Right lobe of liver (tissue), 6 donors: ENCODE measurements at regions of chr1 and their contacts with region 1.

Region 1: DNA sequence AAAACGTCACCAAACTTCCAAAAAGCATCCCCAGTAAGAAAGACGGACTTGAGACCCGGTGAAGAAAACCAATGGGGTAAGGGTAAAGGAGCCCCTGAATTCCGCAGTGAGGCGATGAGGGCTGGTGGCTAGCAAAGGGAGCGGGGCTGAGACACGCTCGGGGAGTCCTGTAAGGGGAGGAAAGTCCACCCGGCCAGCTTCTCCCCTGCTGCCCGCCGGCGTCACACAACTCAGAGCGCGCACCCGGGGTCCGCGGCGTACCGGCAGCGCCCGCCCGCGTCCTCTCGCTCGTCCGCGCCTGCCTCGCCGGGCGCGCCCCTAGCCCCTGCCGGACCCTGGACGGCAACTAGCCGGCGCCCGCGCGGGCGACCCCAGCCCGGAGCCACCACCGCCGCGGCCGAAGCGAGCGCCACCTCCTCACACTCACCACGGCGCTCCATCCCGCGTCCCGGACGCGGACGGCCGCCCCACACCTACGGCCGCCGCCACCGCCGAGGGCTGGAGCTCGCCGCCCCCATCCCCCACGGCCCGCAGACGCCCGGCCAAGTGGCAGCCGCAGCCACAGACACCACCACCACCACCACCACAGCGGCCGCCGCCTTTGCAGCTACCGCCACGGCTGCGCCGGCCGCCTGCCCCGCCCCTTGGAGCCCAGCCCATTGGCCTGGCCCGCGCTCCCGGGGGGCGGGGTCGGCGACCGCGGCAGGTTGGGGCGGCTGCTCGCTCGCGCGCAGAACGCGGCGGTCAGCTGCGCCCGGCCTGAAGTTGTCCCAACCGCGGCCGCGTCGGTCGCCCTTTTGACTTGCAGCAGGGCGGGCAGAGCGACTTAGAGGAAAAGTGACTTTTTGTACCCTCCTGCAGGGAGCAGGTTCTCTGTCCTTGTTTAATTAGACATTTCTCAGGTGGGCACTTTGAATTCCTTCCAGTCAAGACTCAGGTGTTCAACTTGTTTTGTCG is 10.0 kb upstream of the ARHGAP29 start:
- DNase-seq: peak; percentile 90 to 91 (median 90)
- ATAC-seq: peak; percentile 93 to 96 (median 94)
- H3K4me3 ChIP-seq: peak overlapping the region; percentile 45 to 77 (median 60)
- H3K27ac ChIP-seq: peak overlapping the region; percentile 66 to 81 (median 80)
- H3K4me1 ChIP-seq: peaks cover 0 to 5% (median 0%) of the 10 kb centered on the region in 4 donors
- H3K27me3 ChIP-seq: no peaks in the 10 kb centered on the region
- CTCF ChIP-seq: no peak
- POLR2A ChIP-seq: peak; percentile 93

Region 2: DNA sequence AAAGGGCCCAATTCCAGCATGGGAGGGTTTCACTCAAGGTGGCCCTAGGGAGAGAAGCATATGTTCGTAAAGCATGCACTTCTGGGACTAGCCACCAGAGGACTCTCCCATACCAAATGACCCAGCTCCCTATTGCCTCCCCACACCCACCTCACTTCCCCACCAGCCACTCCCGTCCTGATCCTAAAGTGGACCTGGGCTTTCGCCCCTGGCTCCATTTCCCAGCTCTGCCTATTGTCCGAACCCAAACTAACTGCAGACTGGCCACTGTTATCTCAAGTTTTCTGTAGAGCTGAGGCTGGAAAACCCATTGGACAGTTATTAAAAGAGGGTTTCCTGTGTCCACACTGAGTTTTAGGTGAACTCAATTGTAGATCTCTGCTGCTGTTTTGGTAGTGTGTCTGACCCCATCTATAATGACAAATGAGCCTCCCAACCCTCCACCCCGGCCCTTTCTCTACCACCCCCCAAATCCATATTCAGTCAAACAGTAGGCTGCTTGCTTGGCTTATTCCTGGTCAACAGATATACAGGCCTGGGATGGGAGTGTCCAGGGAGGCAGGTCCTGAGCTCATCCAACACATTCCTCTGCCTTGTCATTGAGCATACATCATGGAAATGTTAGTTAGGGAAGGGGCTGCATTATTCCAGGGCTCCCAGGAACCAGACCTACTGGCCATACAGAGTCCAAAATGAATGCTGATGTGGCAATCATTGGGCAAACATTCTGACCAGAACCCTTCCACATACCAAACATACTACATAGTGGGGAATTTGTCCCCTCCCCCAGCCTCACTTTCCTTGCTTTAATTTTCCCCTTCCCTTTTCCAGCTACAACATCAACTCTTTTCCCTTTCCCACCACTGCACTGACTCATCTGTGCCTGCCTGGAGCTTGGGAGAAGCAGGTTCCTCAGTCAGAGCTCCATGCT is 185.6 kb before region 1 on chr1:
- intact Hi-C with region 1: loop called in 1 of 2 experiments (anchors 10 kb)
- DNase-seq: peak; percentile 68 to 82 (median 68)
- ATAC-seq: peak; percentile 93 to 97 (median 96)
- H3K4me3 ChIP-seq: no peak overlapping the region
- H3K27ac ChIP-seq: peak overlapping the region; percentile 50 to 71 (median 51)
- H3K4me1 ChIP-seq: peaks cover 0 to 12% (median 5%) of the 10 kb centered on the region in 4 donors
- H3K27me3 ChIP-seq: no peaks in the 10 kb centered on the region
- CTCF ChIP-seq: peak; percentile 87 to 98 (median 88)
- POLR2A ChIP-seq: peak; percentile 11

Region 3: DNA sequence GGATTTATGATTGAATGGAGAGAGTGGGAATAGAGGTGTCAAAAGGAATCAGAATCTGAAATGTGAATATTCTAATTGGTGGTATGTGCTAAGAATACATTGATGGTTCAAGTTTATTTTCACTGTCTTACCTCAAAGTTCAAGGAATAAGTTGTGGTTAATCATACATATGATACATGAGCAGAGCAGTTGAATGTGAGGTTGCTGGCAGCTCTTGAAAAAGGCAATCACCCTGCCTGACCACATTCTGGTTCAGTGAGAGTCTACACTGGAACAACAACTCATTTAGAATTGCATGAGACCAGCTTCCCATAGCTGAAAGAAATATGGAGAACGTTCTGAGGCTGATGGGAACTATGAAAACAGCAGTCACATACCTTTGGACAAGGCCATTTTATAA is 58.3 kb after region 1 on chr1:
- intact Hi-C with region 1: loop called in 1 of 2 experiments (anchors 5 kb)
- DNase-seq: no peak
- ATAC-seq: no peak
- H3K4me3 ChIP-seq: no peak overlapping the region
- H3K27ac ChIP-seq: no peak overlapping the region
- H3K4me1 ChIP-seq: peaks cover 0 to 26% (median 4%) of the 10 kb centered on the region in 4 donors
- H3K27me3 ChIP-seq: no peaks in the 10 kb centered on the region
- CTCF ChIP-seq: no peak
- POLR2A ChIP-seq: no peak